A673 (cell line): ENCODE measurements at regions of chr3 and their contacts with region 1.

Region 1: DNA sequence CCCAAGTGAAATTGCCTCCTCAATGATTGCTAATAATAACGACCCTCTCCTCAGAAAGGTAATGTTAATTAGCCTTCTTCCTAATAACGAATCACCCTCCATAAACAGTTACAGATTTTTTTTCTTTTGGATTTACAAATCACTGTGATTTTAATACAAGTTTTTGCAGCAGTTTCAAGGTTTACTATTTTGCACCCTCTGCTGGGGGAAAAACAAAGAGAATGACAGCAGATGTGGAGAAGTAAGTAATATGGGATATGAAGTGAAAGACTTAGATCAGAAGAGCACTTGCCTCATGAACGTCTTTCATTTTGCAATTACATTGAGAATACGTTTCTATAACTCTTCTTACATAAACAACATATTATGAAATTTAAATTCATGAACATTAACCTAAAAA is 16.1 kb upstream of the CNTN3 start:
- DNase-seq: peak; percentile 15
- H3K4me3 ChIP-seq: no peak overlapping the region
- H3K27ac ChIP-seq: no peak overlapping the region
- H3K4me1 ChIP-seq: no peaks in the 10 kb centered on the region
- H3K27me3 ChIP-seq: no peaks in the 10 kb centered on the region
- CTCF ChIP-seq: peak; percentile 36

Region 2: GRCh38 chr3:74267588-74268184 is 362.9 kb before region 1 on chr3:
- CTCF ChIA-PET with region 1: no interaction called
- POLR2A ChIA-PET with region 1: no interaction called
- intact Hi-C with region 1: loop called (anchors 2 kb)
- DNase-seq: peak; percentile 62
- H3K4me3 ChIP-seq: no peak overlapping the region
- H3K27ac ChIP-seq: no peak overlapping the region
- H3K4me1 ChIP-seq: no peaks in the 10 kb centered on the region
- H3K27me3 ChIP-seq: no peaks in the 10 kb centered on the region
- CTCF ChIP-seq: peak; percentile 61

Region 3: GRCh38 chr3:74824366-74824765 is 193.8 kb after region 1 on chr3:
- CTCF ChIA-PET with region 1: no interaction called
- POLR2A ChIA-PET with region 1: no interaction called
- intact Hi-C with region 1: no loop called
- DNase-seq: no peak
- H3K4me3 ChIP-seq: no peak overlapping the region
- H3K27ac ChIP-seq: no peak overlapping the region
- H3K4me1 ChIP-seq: no peaks in the 10 kb centered on the region
- H3K27me3 ChIP-seq: no peaks in the 10 kb centered on the region
- CTCF ChIP-seq: no peak